Caco-2 (cell line): ENCODE measurements at regions of chr7 and their contacts with region 1.

Region 1: DNA sequence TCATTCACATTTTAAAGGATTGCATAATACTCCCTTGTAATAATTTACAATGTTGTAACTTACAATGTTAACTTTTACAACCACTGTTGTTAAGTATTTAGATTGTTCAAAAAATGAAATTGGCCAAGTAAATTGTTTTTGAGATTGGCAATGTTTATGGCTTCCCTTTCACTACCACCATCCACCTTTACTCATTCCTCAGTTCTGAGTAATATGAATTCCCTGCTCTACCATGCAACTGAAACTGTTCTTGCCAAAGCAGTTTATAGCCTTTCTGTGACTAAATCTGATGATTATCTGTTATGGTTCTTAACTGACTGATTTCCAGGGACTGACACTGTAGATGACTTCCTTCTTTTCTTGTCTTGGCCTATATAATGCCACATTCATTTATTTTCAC is 80.5 kb upstream of the TMEM106B start:
- DNase-seq: no peak
- H3K4me3 ChIP-seq: no peak overlapping the region
- H3K4me3 Mint-ChIP-seq: no peak overlapping the region
- H3K27ac Mint-ChIP-seq: no peak overlapping the region
- H3K4me1 ChIP-seq: peaks cover 20% of the 10 kb centered on the region
- H3K4me1 Mint-ChIP-seq: peaks cover 11% of the 10 kb centered on the region
- H3K27me3 ChIP-seq: no peaks in the 10 kb centered on the region
- H3K27me3 Mint-ChIP-seq: no peaks in the 10 kb centered on the region
- CTCF ChIP-seq: no peak

Region 2: GRCh38 chr7:11804621-11805020 is 326.0 kb before region 1 on chr7:
- CTCF ChIA-PET with region 1: no interaction called
- POLR2A ChIA-PET with region 1: no interaction called
- intact Hi-C with region 1: no loop called
- DNase-seq: no peak
- H3K4me3 ChIP-seq: no peak overlapping the region
- H3K4me3 Mint-ChIP-seq: no peak overlapping the region
- H3K27ac Mint-ChIP-seq: no peak overlapping the region
- H3K4me1 ChIP-seq: no peaks in the 10 kb centered on the region
- H3K4me1 Mint-ChIP-seq: no peaks in the 10 kb centered on the region
- H3K27me3 ChIP-seq: no peaks in the 10 kb centered on the region
- H3K27me3 Mint-ChIP-seq: no peaks in the 10 kb centered on the region
- CTCF ChIP-seq: no peak

Region 3: DNA sequence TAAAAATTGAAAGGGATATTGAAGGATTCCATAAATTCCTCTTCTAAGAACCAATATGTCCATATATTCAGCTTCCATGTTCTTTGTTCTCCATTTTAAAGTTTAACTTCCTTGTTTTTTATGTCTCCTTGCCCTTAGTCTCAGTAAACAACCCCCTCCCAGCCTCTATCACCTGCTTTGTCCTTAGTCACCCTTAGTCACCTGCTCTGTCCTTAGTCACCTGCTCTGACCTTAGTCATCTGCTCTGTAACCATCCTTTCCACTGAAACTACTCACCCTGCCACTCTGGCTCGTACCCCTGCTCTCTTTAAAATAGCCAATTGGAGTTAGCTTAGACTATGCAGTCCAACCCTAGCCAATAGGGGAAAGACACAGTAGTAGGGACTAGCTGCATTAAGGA is 55.7 kb before region 1 on chr7:
- CTCF ChIA-PET with region 1: no interaction called
- POLR2A ChIA-PET with region 1: no interaction called
- intact Hi-C with region 1: loop called (anchors 2 kb)
- DNase-seq: no peak
- H3K4me3 ChIP-seq: no peak overlapping the region
- H3K4me3 Mint-ChIP-seq: no peak overlapping the region
- H3K27ac Mint-ChIP-seq: no peak overlapping the region
- H3K4me1 ChIP-seq: 0 out of 2 replicates have a peak, but pooled peaks cover 4% of the 10 kb centered on the region
- H3K4me1 Mint-ChIP-seq: no peaks in the 10 kb centered on the region
- H3K27me3 ChIP-seq: no peaks in the 10 kb centered on the region
- H3K27me3 Mint-ChIP-seq: no peaks in the 10 kb centered on the region
- CTCF ChIP-seq: no peak